Heart left ventricle (tissue), 16 donors: ENCODE measurements at regions of chr11 and their contacts with region 1.

Region 1: DNA sequence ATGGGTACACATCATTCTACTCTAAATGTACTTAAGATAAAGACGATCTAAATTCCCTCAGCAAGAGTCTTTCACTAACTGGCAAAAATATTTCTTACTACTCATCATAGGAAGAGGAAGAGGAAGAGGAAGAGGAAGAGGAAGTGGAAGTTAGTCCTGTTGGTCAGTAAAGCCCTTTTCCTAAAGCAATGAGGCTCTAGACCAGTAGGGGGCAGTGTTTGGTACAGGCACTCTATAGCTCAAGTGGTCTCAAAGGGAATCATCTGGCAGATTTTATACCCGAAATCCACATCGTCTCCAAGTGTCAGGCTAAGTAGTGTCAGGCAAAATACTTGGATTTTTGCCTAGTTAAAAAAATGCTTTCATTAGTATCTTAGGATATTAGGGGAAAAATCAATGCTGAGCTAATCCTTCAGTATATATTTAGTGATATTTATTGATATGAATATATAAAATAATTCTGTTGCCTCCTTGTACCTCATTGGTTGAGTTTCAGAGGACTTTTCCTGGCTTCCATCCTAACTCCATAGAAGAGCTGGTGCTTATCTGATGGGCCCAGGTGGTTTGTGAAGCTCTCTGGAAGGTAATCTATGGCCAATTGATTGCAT is 7.7 kb downstream of the BLID start:
- DNase-seq: no peak
- ATAC-seq: no peak
- H3K4me3 ChIP-seq: no peak overlapping the region
- H3K27ac ChIP-seq: peak overlapping the region in 10 of 12 donors; percentile 46 to 85 (median 63)
- H3K4me1 ChIP-seq: peaks cover 0 to 33% (median 10%) of the 10 kb centered on the region in 12 donors
- H3K27me3 ChIP-seq: no peaks in the 10 kb centered on the region
- CTCF ChIP-seq: peak; percentile 29 to 59 (median 46)
- POLR2A ChIP-seq: no peak

Region 2: GRCh38 chr11:121722431-121723245 is 385.7 kb before region 1 on chr11:
- intact Hi-C with region 1: loop called in 1 of 10 experiments (anchors 10 kb)
- DNase-seq: peak; percentile 78 to 90 (median 86)
- ATAC-seq: peak; percentile 91 to 97 (median 96)
- H3K4me3 ChIP-seq: peak overlapping the region in 11 of 12 donors; percentile 30 to 61 (median 50)
- H3K27ac ChIP-seq: peak overlapping the region; percentile 49 to 91 (median 84)
- H3K4me1 ChIP-seq: peaks cover 0 to 16% (median 4%) of the 10 kb centered on the region in 12 donors
- H3K27me3 ChIP-seq: peaks cover 0 to 7% (median 0%) of the 10 kb centered on the region in 9 donors
- CTCF ChIP-seq: peak in 5 of 12 donors; percentile 9 to 30 (median 12)
- POLR2A ChIP-seq: no peak

Region 3: DNA sequence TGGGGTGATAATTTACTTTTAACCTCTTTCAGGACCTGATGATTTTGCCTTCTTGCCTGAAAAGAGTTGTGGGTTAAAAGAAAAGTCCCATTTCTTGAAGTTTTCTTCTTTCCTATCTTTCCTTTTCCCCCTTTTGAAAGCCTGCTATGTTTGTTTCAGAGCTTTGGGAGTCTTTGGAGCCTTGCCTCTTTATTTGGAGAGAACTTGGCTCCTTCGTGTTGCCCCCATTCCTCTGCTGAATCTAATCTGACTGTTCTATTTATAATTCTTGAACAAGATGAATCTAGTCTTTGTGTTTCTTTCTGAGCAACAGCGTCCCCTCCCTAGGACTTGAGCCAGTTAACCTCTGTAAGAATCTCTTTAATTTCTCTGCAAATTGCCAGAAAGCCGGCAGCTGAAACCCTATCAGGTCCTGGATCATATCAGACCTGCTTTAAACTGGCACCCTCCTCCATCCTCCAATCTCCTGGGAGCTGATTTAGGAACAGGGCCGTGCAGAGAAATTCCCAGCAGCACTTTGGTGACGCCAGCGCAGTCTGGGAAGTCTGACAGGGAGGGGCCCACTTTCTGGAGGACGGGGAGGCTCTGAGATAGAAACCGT is 366.4 kb before region 1 on chr11:
- intact Hi-C with region 1: loop called in 2 of 10 experiments (anchors 5 to 10 kb)
- DNase-seq: peak; percentile 76 to 90 (median 79)
- ATAC-seq: peak; percentile 88 to 97 (median 96)
- H3K4me3 ChIP-seq: peak overlapping the region in 5 of 12 donors; percentile 5 to 19 (median 14)
- H3K27ac ChIP-seq: peak overlapping the region; percentile 68 to 91 (median 84)
- H3K4me1 ChIP-seq: peaks cover 0 to 28% (median 19%) of the 10 kb centered on the region in 12 donors
- H3K27me3 ChIP-seq: no peaks in the 10 kb centered on the region
- CTCF ChIP-seq: peak in 6 of 12 donors; percentile 7 to 27 (median 18)
- POLR2A ChIP-seq: no peak

Region 4: GRCh38 chr11:121930004-121930965 is 178.0 kb before region 1 on chr11:
- intact Hi-C with region 1: loop called in 1 of 10 experiments (anchors 10 kb)
- DNase-seq: peak in 2 of 5 donors; percentile 10 to 32
- ATAC-seq: peak in 2 of 4 donors; percentile 37 to 38
- H3K4me3 ChIP-seq: peak overlapping the region in 11 of 12 donors; percentile 3 to 55 (median 39)
- H3K27ac ChIP-seq: peak overlapping the region in 7 of 12 donors; percentile 8 to 64 (median 51)
- H3K4me1 ChIP-seq: peaks cover 0 to 19% (median 8%) of the 10 kb centered on the region in 12 donors
- H3K27me3 ChIP-seq: no peaks in the 10 kb centered on the region
- CTCF ChIP-seq: no peak
- POLR2A ChIP-seq: no peak

Region 5: DNA sequence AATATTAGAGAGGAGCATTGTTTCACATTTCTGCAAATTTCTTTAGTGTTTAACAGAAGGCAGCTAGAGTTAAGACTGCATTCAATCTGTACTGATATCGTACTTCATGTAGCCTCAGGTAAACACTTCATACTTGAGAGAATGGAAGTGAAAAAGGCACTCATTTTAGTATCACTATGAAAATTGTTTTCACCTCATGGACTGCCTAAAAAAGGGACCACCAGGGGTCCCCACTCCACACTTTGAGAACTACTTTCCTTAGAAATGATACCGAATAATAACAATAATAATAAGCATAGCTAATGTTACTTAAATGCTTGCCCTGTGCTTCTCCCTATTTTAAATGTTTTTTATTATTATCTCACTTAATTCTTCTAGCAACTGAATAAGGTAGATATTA is 87.4 kb before region 1 on chr11:
- intact Hi-C with region 1: loop called in 3 of 10 experiments (anchors 5 to 10 kb)
- DNase-seq: no peak
- ATAC-seq: no peak
- H3K4me3 ChIP-seq: no peak overlapping the region
- H3K27ac ChIP-seq: no peak overlapping the region
- H3K4me1 ChIP-seq: peaks cover 0 to 9% (median 0%) of the 10 kb centered on the region in 12 donors
- H3K27me3 ChIP-seq: no peaks in the 10 kb centered on the region
- CTCF ChIP-seq: peak; percentile 19 to 61 (median 44)
- POLR2A ChIP-seq: no peak

Region 6: DNA sequence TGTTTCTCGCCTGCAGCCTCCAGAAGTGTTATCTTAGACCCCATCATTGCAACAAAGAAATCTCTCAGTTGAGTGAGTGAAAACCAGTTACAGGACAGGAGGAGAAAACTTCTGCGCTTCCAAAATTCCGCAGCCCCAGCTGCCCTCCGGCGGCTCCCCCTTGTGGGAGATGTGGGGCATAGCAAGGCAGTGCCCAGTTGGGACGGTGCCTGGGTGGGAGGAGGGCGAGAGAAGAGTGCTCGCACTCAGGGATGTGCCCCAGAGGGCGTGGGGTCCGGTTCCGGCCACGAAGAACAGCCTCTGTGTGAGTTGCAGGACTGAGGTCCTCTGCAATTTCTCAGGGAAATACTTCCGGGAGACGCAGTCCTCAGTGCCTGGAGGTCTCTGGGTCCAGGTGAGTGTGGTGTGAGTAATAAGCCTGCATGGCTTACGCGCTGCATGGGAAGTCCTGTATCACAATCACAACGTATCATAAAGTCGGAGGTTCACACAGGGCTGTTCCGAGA is 94.7 kb after region 1 on chr11:
- intact Hi-C with region 1: loop called in 8 of 10 experiments (anchors 5 to 10 kb)
- DNase-seq: peak; percentile 63 to 84 (median 66)
- ATAC-seq: peak; percentile 65 to 89 (median 85)
- H3K4me3 ChIP-seq: peak overlapping the region in 10 of 12 donors; percentile 15 to 59 (median 40)
- H3K27ac ChIP-seq: peak overlapping the region in 6 of 12 donors; percentile 32 to 50 (median 44)
- H3K4me1 ChIP-seq: peaks cover 0 to 64% (median 27%) of the 10 kb centered on the region in 12 donors
- H3K27me3 ChIP-seq: no peaks in the 10 kb centered on the region
- CTCF ChIP-seq: peak; percentile 93 to 100 (median 97)
- POLR2A ChIP-seq: no peak

Region 7: DNA sequence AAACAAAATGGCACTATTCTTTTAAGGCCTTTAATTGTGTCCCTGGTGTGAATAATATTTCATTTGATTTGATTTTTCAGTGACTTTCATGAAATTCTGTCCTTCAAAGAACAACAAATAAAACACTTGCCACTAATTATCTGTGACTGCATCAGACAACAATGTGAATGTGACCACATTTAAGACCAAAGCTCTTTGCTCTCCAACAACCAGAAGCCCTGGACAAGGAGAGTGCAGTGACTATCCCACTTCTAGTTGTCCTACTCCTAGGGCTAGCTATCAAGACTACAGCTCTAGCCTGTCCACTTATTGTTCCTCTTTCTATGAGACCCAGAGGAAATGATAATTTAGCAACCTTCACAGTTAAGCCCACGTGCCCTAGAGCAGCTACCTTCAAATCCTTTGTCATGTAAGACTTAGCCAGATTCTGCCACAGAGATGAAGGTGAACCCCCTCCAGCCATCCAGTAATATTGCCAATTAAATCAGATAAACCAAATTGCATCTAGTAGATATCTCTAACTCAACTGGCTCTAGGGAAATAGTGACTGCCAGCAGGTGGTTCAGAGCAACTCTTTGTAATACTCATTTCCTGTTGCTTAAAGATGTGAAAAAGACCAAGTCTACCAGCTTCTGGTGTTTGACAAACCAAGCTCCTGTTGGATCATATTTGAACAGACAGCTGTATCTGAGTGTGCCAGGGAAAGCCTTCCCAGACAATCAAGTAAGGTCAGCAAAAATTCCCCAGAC is 150.3 kb after region 1 on chr11:
- intact Hi-C with region 1: no loop called
- DNase-seq: no peak
- ATAC-seq: no peak
- H3K4me3 ChIP-seq: no peak overlapping the region
- H3K27ac ChIP-seq: no peak overlapping the region
- H3K4me1 ChIP-seq: peaks cover 0 to 16% (median 0%) of the 10 kb centered on the region in 12 donors
- H3K27me3 ChIP-seq: no peaks in the 10 kb centered on the region
- CTCF ChIP-seq: no peak
- POLR2A ChIP-seq: no peak